ENCODE measurements at regions of chr6 and their contacts with region 1.

Region 1: DNA sequence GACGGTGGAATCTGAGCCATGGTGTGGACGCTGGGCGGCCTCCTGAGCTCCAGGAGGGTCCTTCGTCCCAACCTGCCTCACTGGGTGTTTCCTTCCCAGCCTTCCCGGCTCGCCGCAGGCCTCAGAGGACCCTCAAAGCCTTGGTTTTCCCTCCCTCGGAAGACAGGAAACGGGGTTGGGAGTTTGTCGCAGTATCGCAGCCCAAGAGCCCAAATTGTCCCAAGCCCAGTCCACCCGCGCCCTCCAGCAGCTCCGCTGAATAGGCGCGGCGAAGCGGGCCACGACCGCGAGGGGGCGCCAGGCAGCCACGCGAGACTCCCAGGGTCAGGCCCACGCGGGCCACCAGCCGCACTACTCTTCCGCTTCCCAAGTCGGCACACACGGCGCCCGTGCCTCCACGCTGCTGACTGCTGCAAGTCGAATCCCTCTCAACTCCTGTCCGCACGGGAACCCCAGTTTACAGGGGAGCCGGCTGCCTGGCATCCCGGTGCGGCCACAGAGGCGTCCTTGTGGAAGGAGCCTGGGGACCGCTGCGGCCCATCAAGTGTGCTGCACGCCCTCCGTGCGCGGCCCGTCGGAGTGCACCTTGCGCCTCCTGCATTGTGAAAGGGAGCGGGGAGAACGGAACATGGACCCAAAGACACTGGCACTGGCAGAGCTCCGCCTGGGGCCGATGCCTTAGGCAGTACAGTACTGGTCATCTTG is 40.4 kb upstream of the HMGA1 start:
- DNase-seq: peak; percentile 87
- ATAC-seq: peak; percentile 99
- H3K4me3 Mint-ChIP-seq: peak overlapping the region; percentile 76
- H3K27ac Mint-ChIP-seq: peak overlapping the region; percentile 28
- H3K4me1 Mint-ChIP-seq: peaks cover 6% of the 10 kb centered on the region
- H3K27me3 Mint-ChIP-seq: peaks cover 14% of the 10 kb centered on the region

Region 2: GRCh38 chr6:34182751-34183531 is 13.3 kb before region 1 on chr6:
- CTCF ChIA-PET with region 1: interaction called, 17 read pairs
- DNase-seq: peak; percentile 89
- ATAC-seq: peak; percentile 92
- H3K4me3 Mint-ChIP-seq: peak overlapping the region; percentile 28
- H3K27ac Mint-ChIP-seq: peak overlapping the region; percentile 80
- H3K4me1 Mint-ChIP-seq: peaks cover 17% of the 10 kb centered on the region
- H3K27me3 Mint-ChIP-seq: peaks cover 4% of the 10 kb centered on the region

Region 3: GRCh38 chr6:34236131-34236996 is 40.1 kb after region 1 on chr6 and contains the start of gene HMGA1:
- CTCF ChIA-PET with region 1: interaction called, 14 read pairs
- DNase-seq: peak; percentile 92
- ATAC-seq: peak; percentile 80
- H3K4me3 Mint-ChIP-seq: peak within 1 kb of the TSS; percentile 81
- H3K27ac Mint-ChIP-seq: peak within 1 kb of the TSS; percentile 86
- H3K4me1 Mint-ChIP-seq: peaks cover 35% of the 10 kb centered on the region
- H3K27me3 Mint-ChIP-seq: no peaks in the 10 kb centered on the region
- total RNA-seq, gene HMGA1: 214 to 312 TPM

Region 4: DNA sequence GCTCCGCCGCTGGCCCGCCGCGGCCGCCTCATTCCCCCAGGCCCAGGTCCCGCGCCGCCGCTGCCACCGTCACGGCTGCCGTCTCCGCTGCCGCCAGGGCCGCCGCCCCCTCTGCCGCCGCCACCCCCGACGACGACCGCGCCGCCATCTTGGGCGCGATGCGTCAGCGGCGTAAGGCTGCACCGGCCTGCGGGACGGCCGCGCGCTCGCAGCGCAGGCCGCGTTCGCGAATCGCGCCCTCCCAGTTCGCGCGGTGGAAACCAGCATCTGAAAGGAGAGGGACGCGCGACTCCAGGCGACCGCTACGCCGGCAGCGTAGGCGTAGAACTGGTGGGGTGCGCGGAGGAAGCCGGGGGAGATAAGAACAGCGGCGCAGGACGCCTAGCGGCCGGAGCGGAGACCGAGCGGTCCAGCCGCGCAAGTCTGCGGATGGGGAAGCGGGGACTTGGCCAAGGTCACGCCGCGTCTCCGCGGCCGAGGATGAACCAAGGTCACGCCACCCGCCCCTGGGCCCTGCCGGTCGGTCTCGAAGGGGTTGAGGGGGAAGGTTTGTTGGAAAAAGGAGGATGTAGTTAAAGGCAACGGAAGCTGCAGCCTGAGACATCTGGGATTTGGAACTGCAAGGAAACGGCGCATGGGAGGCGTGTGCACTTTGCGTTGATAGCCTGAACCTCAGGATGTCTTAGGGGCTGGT is 196.4 kb after region 1 on chr6 and contains the start of gene NUDT3:
- CTCF ChIA-PET with region 1: interaction called, 10 read pairs
- DNase-seq: peak; percentile 96
- ATAC-seq: peak; percentile 93
- H3K4me3 Mint-ChIP-seq: no peak within 1 kb of the TSS
- H3K27ac Mint-ChIP-seq: peak within 1 kb of the TSS; percentile 82
- H3K4me1 Mint-ChIP-seq: peaks cover 11% of the 10 kb centered on the region
- H3K27me3 Mint-ChIP-seq: no peaks in the 10 kb centered on the region
- total RNA-seq, gene NUDT3: 8.6 to 13.4 TPM

Region 5: GRCh38 chr6:34610819-34611477 is 414.7 kb after region 1 on chr6:
- CTCF ChIA-PET with region 1: interaction called, 16 read pairs
- DNase-seq: no peak
- ATAC-seq: no peak
- H3K4me3 Mint-ChIP-seq: no peak overlapping the region
- H3K27ac Mint-ChIP-seq: no peak overlapping the region
- H3K4me1 Mint-ChIP-seq: peaks cover 19% of the 10 kb centered on the region
- H3K27me3 Mint-ChIP-seq: no peaks in the 10 kb centered on the region

Measured in activated CD8-positive, alpha-beta memory T cell treated with anti-CD3 and anti-CD28 coated beads, Interleukin-2, amount 10 ng/mL, durations not matched to agents 7 days and 5 days (primary cell).